Heart left ventricle (tissue), 16 donors: ENCODE measurements at regions of chr11 and their contacts with region 1.

Region 1: GRCh38 chr11:70191495-70192140 is 11.5 kb upstream of the FADD start:
- DNase-seq: peak; percentile 74 to 90 (median 80)
- ATAC-seq: peak; percentile 80 to 93 (median 89)
- H3K4me3 ChIP-seq: no peak overlapping the region
- H3K27ac ChIP-seq: peak overlapping the region in 1 of 12 donors; percentile 18
- H3K4me1 ChIP-seq: peaks cover 0 to 6% (median 0%) of the 10 kb centered on the region in 12 donors
- H3K27me3 ChIP-seq: no peaks in the 10 kb centered on the region
- CTCF ChIP-seq: peak; percentile 82 to 95 (median 92)
- POLR2A ChIP-seq: no peak

Region 2: GRCh38 chr11:69683764-69684333 is 507.8 kb before region 1 on chr11:
- intact Hi-C with region 1: loop called (anchors 2 to 5 kb)
- DNase-seq: no peak
- ATAC-seq: no peak
- H3K4me3 ChIP-seq: no peak overlapping the region
- H3K27ac ChIP-seq: no peak overlapping the region
- H3K4me1 ChIP-seq: peaks cover 0 to 7% (median 0%) of the 10 kb centered on the region in 12 donors
- H3K27me3 ChIP-seq: peaks cover 0 to 13% (median 3%) of the 10 kb centered on the region in 9 donors
- CTCF ChIP-seq: peak in 7 of 12 donors; percentile 9 to 40 (median 22)
- POLR2A ChIP-seq: no peak

Region 3: DNA sequence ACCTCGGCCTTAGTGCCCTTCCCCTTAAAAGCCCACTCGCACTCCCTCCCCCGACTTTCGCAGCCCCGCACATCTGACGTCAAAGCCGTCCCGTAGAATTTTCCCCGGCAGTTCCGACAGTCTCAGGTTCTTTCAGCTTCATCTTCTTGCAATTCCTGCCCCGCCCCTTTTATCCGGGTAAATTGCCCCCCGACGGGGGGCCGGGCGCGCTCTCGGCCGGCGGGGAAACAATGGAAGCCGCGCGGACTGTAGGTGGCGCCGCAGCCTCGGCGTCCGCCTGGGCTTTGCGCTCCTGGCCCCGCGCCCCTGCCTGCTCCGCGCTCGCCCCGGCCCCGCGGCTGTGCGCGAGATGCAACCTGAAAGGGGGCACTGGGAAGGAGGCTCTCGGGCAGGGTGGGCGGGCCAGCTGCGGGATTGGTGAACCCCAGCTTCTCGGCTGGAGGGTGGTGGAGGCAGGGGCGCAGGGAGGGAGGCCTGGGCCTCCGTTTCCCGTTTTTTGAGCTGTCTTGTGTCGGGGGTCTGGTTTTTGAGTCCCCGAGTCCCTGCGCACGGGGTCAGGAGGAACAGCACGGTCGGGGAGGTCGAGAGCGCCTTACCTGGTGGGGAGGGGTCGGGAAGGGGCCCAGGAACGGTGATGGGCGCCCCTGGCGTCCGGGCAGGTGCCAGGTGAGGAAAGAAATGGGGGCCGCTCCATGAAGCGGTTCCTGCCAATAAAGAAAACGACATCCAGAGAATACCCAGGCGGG is 486.9 kb before region 1 on chr11:
- intact Hi-C with region 1: loop called in 2 of 10 experiments (anchors 5 kb)
- DNase-seq: no peak
- ATAC-seq: peak in 1 of 4 donors; percentile 70
- H3K4me3 ChIP-seq: peak overlapping the region in 8 of 12 donors; percentile 6 to 32 (median 18)
- H3K27ac ChIP-seq: no peak overlapping the region
- H3K4me1 ChIP-seq: peaks cover 0 to 40% (median 13%) of the 10 kb centered on the region in 12 donors
- H3K27me3 ChIP-seq: peaks cover 38 to 83% (median 59%) of the 10 kb centered on the region in 9 donors
- CTCF ChIP-seq: peak in 11 of 12 donors; percentile 21 to 57 (median 48)
- POLR2A ChIP-seq: no peak

Region 4: GRCh38 chr11:69718147-69718546 is 473.5 kb before region 1 on chr11:
- intact Hi-C with region 1: loop called in 2 of 10 experiments (anchors 10 kb)
- DNase-seq: peak in 4 of 5 donors; percentile 37 to 60 (median 50)
- ATAC-seq: peak; percentile 43 to 68 (median 61)
- H3K4me3 ChIP-seq: no peak overlapping the region
- H3K27ac ChIP-seq: no peak overlapping the region
- H3K4me1 ChIP-seq: peaks cover 0 to 9% (median 0%) of the 10 kb centered on the region in 12 donors
- H3K27me3 ChIP-seq: peaks cover 9 to 63% (median 22%) of the 10 kb centered on the region in 9 donors
- CTCF ChIP-seq: peak; percentile 32 to 69 (median 52)
- POLR2A ChIP-seq: no peak

Region 5: DNA sequence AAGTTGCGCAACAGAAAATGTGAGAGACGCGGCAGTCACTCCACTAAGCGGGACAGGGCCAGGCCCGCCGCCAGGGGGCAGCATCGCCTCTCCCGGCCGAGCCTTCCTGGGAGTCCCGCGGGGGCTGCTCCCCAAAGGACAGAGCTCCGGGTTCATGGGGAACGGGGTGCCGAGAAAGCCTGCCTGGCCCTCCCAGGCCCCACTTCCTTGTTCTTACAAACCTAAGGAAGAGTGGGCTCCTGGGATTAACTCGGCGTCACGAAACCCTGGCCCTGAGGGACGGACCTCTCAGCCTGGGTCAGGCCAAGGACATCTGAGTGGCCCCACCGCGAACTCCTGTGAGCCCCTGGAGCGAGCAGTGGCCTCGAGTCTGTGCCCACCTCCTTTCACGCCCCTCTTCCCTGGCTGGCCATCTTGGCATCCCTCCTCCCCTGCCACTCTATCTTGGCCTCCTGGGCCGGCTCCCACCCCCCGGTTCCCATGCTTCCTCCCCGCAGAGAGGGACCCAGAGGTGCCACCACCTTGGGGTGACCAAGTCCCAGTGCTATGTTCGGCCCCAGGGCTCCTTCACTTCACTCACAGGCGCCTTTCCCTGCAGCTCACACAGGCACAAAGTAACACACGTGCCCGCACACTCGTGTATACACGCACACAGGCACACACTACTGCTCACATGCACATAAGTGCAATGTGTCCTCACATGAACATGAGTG is 272.5 kb before region 1 on chr11:
- intact Hi-C with region 1: loop called (anchors 1 to 2 kb)
- DNase-seq: peak; percentile 79 to 92 (median 80)
- ATAC-seq: peak; percentile 47 to 78 (median 66)
- H3K4me3 ChIP-seq: peak overlapping the region in 3 of 12 donors; percentile 9 to 19 (median 14)
- H3K27ac ChIP-seq: peak overlapping the region in 10 of 12 donors; percentile 39 to 80 (median 64)
- H3K4me1 ChIP-seq: peaks cover 3 to 36% (median 28%) of the 10 kb centered on the region in 12 donors
- H3K27me3 ChIP-seq: peaks cover 0 to 17% (median 0%) of the 10 kb centered on the region in 9 donors
- CTCF ChIP-seq: peak; percentile 89 to 98 (median 96)
- POLR2A ChIP-seq: no peak

Region 6: DNA sequence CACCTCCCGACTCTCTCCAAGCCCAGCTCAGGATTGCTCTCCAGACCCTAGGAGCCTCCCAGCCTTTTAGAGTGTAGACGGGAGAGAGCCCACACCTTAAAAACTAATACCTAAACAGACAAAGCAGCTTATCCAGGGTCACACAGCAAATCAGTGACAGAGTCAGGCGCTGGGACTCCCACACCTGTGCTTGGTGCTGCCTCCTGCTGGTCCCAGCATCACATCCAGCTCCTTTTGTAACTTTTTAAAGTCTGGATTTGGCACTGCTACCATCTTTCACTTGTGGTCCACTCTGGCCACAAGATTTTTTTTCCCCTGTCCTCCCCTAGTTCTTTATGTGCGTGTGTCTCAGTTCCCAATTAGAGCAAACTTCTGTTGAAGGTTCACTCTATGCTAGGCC is 108.8 kb before region 1 on chr11:
- intact Hi-C with region 1: loop called in 2 of 10 experiments (anchors 5 to 10 kb)
- DNase-seq: peak in 1 of 5 donors; percentile 10
- ATAC-seq: no peak
- H3K4me3 ChIP-seq: no peak overlapping the region
- H3K27ac ChIP-seq: peak overlapping the region in 1 of 12 donors; percentile 34
- H3K4me1 ChIP-seq: peaks cover 0 to 24% (median 2%) of the 10 kb centered on the region in 12 donors
- H3K27me3 ChIP-seq: peaks cover 0 to 19% (median 4%) of the 10 kb centered on the region in 9 donors
- CTCF ChIP-seq: peak in 4 of 12 donors; percentile 11 to 30 (median 18)
- POLR2A ChIP-seq: no peak

Region 7: GRCh38 chr11:70556884-70557741 is 365.5 kb after region 1 on chr11:
- intact Hi-C with region 1: no loop called
- DNase-seq: peak in 1 of 5 donors; percentile 23
- ATAC-seq: peak in 1 of 4 donors; percentile 50
- H3K4me3 ChIP-seq: no peak overlapping the region
- H3K27ac ChIP-seq: no peak overlapping the region
- H3K4me1 ChIP-seq: no peaks in the 10 kb centered on the region
- H3K27me3 ChIP-seq: peaks cover 0 to 5% (median 0%) of the 10 kb centered on the region in 9 donors
- CTCF ChIP-seq: no peak
- POLR2A ChIP-seq: no peak